ENCODE measurements at regions of chr5 and their contacts with region 1.

Region 1: GRCh38 chr5:65925601-65926275 is 637 bp upstream of the ERBIN start:
- DNase-seq: peak; percentile 82
- H3K4me3 ChIP-seq: peak overlapping the region; percentile 89 to 96
- H3K27ac ChIP-seq: peak overlapping the region; percentile 98 to 100
- H3K4me1 ChIP-seq: peaks cover 6% of the 10 kb centered on the region
- H3K27me3 ChIP-seq: no peaks in the 10 kb centered on the region
- CTCF ChIP-seq: peak in 2 of 3 experiments; percentile 23 to 28
- POLR2A ChIP-seq: peak; percentile 34

Region 2: GRCh38 chr5:65774346-65774745 is 151.4 kb before region 1 on chr5:
- intact Hi-C with region 1: no loop called
- DNase-seq: no peak
- H3K4me3 ChIP-seq: no peak overlapping the region
- H3K27ac ChIP-seq: no peak overlapping the region
- H3K4me1 ChIP-seq: no peaks in the 10 kb centered on the region
- H3K27me3 ChIP-seq: no peaks in the 10 kb centered on the region
- CTCF ChIP-seq: no peak
- POLR2A ChIP-seq: no peak

Region 3: GRCh38 chr5:65913519-65913918 is 12.2 kb before region 1 on chr5:
- intact Hi-C with region 1: no loop called
- DNase-seq: peak; percentile 37
- H3K4me3 ChIP-seq: no peak overlapping the region
- H3K27ac ChIP-seq: no peak overlapping the region
- H3K4me1 ChIP-seq: no peaks in the 10 kb centered on the region
- H3K27me3 ChIP-seq: no peaks in the 10 kb centered on the region
- CTCF ChIP-seq: no peak
- POLR2A ChIP-seq: no peak

Region 4: DNA sequence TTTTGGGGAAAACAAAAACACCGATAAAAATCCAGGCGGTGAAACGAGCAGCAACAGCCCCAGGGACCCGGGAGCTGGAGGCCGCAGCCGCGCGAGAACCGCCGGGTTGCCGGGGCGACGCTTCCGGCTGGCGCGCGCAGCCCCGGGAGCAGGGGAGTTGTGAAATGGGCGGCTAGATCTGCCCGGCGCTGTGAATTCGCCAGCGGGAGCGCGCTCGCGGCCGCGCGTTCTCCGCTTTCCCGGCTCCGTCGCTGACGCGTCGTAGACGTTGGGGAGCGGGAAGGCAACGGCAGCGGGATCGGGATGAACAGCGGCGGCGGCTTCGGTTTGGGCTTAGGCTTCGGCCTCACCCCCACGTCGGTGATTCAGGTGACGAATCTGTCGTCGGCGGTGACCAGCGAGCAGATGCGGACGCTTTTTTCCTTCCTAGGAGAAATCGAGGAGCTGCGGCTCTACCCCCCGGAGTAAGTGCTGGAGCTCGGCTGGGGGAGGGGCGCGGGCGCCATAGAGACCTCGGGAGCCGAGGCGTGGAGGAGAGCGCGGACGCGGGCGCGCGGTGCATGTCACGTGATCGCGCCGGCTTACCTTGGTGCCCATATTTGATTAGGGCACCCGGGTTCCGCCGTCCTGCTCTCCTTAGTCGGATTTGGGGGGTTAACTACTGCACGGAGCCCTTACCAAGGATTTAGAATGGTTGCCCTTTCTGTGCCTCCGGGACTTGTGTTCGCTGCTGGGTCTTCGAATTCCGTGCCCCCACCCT is 218.5 kb after region 1 on chr5 and contains the start of gene SREK1:
- intact Hi-C with region 1: loop called (anchors 10 kb)
- DNase-seq: peak; percentile 97
- H3K4me3 ChIP-seq: peak within 1 kb of the TSS; percentile 80 to 87
- H3K27ac ChIP-seq: peak within 1 kb of the TSS; percentile 96 to 99
- H3K4me1 ChIP-seq: peaks cover 13% of the 10 kb centered on the region
- H3K27me3 ChIP-seq: no peaks in the 10 kb centered on the region
- CTCF ChIP-seq: no peak
- POLR2A ChIP-seq: no peak
- total RNA-seq, gene SREK1: 108 to 139 TPM

Measured in testis (tissue), 5 donors.